ENCODE measurements at regions of chr17 and their contacts with region 1.

Region 1: DNA sequence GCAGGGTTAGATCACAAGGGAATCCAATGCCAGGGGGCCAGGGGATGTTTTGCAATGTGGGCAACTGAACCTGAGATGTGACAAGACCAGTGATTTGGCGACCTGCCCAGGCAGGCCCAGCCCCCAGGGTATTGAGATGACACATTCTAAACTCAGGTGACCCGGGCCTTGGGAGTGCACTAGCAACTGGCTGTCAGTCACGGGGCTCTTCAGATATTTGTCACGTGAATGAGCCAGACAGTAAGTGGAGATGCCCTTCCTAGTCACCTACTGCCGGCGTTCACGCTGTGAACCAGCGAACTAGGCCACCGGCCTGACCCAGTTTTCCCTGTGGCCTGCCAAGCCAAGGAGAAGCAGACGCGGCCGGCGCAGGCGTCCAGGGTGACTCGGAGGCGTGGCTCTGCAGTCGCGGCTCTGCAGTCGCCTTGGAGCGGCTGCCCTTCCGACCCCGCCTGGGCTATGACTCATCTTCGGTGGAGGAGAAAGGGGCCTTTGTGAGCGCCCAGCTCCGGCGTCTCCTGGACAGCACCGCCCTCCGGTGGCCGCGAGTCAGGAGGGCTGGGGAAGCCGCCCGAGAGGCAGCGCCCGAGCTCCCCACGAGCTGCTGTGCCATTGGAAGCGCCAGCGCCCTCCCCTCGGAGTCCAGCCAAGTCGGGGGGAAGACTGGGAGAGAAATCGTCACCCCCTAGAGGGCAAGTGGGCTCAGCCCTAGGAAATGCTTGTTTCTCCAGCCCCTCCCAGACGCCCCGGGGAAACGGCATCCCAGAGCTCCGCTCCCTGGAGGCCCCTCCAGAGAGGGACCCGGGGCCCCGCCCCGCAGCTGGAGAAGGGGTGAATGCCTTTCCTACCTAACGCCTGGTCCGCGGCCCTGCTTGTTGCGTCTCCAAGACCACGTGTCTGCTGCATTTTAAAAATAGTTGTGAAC is 38.8 kb downstream of the WSB1 start:
- DNase-seq: peak; percentile 92 to 100 (median 96)

Region 2: GRCh38 chr17:27236717-27237315 is 95.9 kb before region 1 on chr17:
- intact Hi-C with region 1: loop called (anchors 2 kb)
- DNase-seq: peak in 6 of 10 donors; percentile 50 to 89 (median 78)

Region 3: DNA sequence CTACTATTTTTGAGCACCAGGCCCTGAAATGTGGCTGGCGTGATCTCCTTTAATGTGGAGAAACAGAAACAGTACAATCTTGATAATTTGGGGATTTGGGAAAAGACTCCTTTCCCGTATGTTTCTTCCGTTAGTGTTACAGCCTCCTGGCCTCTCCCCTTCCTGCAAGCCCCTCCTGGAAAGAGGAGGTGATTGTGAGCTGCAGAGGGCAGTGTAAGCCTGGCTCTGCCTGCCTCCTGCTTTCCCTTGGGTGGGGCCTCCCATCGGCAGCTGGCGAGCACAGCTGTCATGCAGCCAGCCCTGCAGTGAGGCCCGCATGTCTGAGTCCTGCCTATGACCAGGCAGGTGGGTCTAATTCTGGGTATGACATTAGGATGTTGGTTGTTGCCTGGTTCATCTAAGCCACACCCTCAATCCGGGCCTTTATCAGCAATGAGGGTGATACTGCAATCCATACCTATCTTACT is 87.5 kb before region 1 on chr17:
- intact Hi-C with region 1: loop called (anchors 1 kb)
- DNase-seq: peak; percentile 61 to 97 (median 82)

Region 4: DNA sequence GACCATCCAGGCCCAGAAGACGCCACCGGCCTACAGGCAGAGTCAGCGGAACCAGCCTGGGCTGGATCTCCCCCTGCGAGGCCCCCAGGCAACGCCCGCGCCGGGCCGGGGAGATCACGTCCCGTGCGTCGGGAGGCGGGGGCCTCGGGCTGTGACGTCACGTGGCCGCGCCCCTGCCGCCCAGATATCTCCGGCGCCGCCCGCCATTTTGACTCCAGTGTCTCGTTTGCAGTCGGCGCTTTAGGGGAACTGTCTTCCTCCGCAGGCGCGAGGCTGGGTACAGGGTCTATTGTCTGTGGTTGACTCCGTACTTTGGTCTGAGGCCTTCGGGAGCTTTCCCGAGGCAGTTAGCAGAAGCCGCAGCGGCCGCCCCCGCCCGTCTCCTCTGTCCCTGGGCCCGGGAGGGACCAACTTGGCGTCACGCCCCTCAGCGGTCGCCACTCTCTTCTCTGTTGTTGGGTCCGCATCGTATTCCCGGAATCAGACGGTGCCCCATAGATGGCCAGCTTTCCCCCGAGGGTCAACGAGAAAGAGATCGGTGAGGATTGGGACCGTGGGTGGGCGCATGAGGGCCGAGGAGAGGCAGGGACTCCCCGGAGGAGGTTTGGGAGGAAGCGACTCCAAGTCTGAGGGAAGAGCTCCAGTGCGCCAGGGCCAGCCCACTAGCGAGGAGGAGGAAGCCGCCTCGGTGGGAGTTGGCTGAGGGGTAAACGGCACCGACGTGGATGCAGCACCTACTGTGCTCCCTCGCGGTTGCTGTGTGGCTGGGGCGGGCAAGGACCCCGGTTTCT is 38.7 kb before region 1 on chr17 and contains the start of gene WSB1:
- intact Hi-C with region 1: loop called (anchors 1 kb)
- DNase-seq: peak; percentile 90 to 99 (median 94)

Region 5: DNA sequence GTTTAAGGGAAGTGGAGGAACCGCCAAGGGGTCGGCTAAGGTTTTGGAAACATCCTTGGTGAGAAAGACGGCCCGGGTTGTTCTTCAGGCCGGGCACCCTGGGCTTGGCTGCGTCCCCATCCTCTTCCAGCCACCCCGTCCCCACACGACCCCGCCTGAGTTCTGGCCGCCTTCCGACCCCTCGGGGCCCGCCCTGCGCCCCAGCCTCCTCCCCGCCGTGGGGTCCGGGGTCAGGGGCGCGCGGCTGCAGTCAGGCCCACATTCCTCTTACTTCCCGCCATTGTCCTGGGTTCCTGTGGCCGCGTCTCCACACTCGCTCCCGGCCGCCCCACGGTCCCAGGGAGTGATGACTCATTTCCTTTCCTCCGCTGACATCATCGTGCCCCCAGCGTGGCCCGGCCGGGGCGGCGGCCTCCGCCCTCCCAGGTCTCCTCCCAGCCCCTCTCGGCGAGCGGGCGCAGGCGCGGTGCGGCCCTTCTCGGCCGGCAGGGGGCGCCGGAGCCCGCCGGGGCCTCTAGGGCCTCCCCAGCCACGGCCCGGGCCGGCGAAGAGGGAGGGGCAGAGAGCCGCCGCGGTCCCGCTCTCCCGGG is 20.8 kb after region 1 on chr17:
- intact Hi-C with region 1: loop called (anchors 1 kb)
- DNase-seq: peak; percentile 50 to 96 (median 75)

Measured in posterior cingulate gyrus (tissue), 11 donors.